Endothelial cell of umbilical vein (primary cell): ENCODE measurements at regions of chr3 and their contacts with region 1.

Region 1: GRCh38 chr3:160948272-160948671 is 156.9 kb downstream of the B3GALNT1 start:
- DNase-seq: peak; percentile 13
- H3K4me3 ChIP-seq: no peak overlapping the region
- H3K27ac ChIP-seq: no peak overlapping the region
- H3K4me1 ChIP-seq: no peaks in the 10 kb centered on the region
- H3K27me3 ChIP-seq: no peaks in the 10 kb centered on the region
- CTCF ChIP-seq: no peak
- POLR2A ChIP-seq: no peak

Region 2: GRCh38 chr3:160346511-160346910 is 601.8 kb before region 1 on chr3:
- CTCF ChIA-PET with region 1: no interaction called
- POLR2A ChIA-PET with region 1: no interaction called
- dilution Hi-C with region 1: no loop called
- intact Hi-C with region 1: no loop called
- DNase-seq: no peak
- H3K4me3 ChIP-seq: no peak overlapping the region
- H3K27ac ChIP-seq: no peak overlapping the region
- H3K4me1 ChIP-seq: no peaks in the 10 kb centered on the region
- H3K27me3 ChIP-seq: no peaks in the 10 kb centered on the region
- CTCF ChIP-seq: no peak
- POLR2A ChIP-seq: no peak

Region 3: GRCh38 chr3:160935413-160936095 is 12.7 kb before region 1 on chr3:
- CTCF ChIA-PET with region 1: interaction called, 10 read pairs
- POLR2A ChIA-PET with region 1: no interaction called
- dilution Hi-C with region 1: no loop called
- intact Hi-C with region 1: no loop called
- DNase-seq: no peak
- H3K4me3 ChIP-seq: no peak overlapping the region
- H3K27ac ChIP-seq: no peak overlapping the region
- H3K4me1 ChIP-seq: no peaks in the 10 kb centered on the region
- H3K27me3 ChIP-seq: no peaks in the 10 kb centered on the region
- CTCF ChIP-seq: no peak
- POLR2A ChIP-seq: no peak

Region 4: GRCh38 chr3:161142486-161142885 is 194.2 kb after region 1 on chr3:
- CTCF ChIA-PET with region 1: no interaction called
- POLR2A ChIA-PET with region 1: no interaction called
- dilution Hi-C with region 1: no loop called
- intact Hi-C with region 1: no loop called
- DNase-seq: no peak
- H3K4me3 ChIP-seq: no peak overlapping the region
- H3K27ac ChIP-seq: no peak overlapping the region
- H3K4me1 ChIP-seq: peaks cover 14% of the 10 kb centered on the region
- H3K27me3 ChIP-seq: no peaks in the 10 kb centered on the region
- CTCF ChIP-seq: no peak
- POLR2A ChIP-seq: no peak